CD4-positive, alpha-beta memory T cell (primary cell): ENCODE measurements at regions of chr7 and their contacts with region 1.

Region 1: DNA sequence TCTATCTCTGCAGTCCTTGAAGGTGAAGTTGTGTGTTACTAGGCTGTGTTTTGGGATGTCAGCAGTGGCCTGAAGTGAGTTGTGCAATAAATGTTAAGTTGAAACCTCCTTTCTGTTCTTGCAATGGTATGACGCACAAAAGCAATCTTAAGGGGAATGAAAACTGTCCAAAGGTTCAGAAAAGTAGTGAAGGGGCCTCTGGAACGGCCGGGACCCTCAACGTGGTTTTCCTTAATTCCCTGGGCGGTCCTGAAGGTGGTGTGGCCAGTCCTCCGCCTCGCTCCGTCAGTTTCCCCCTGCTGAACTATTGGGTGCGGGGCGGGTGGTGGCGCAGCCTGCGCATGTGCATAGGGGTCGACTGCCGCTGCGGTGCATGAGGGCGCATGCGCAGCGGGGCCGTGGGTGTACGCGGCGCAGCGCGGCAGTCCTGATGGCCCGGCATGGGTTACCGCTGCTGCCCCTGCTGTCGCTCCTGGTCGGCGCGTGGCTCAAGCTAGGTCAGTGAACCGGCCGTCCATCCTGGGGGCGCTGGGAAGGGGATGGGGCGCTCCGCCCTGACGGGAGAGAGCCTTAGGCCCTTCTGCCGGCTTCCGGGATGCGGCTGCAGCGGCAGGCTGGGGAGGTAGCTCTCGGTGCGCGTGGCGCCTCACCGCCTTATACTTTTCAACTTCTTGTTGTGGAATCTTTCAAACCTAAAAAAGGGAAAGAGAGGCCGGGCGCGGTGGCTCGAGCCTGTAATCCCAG is at the start of gene SUMF2:
- DNase-seq: peak; percentile 88 to 95 (median 92)
- H3K4me3 ChIP-seq: peak within 1 kb of the TSS; percentile 81 to 97
- H3K4me3 Mint-ChIP-seq: peak within 1 kb of the TSS; percentile 89 to 95 (median 94)
- H3K27ac ChIP-seq: peak within 1 kb of the TSS; percentile 72
- H3K27ac Mint-ChIP-seq: peak within 1 kb of the TSS; percentile 90 to 98 (median 95)
- H3K4me1 ChIP-seq: peaks cover 22% of the 10 kb centered on the region
- H3K4me1 Mint-ChIP-seq: peaks cover 21 to 38% (median 28%) of the 10 kb centered on the region in 4 donors
- H3K27me3 ChIP-seq: no peaks in the 10 kb centered on the region
- H3K27me3 Mint-ChIP-seq: no peaks in the 10 kb centered on the region
- total RNA-seq, gene SUMF2: 172 to 177 TPM

Region 2: GRCh38 chr7:56033671-56034432 is 30.2 kb before region 1 on chr7:
- CTCF ChIA-PET with region 1: interaction called, 6 read pairs
- POLR2A ChIA-PET with region 1: interaction called, 10 read pairs
- intact Hi-C with region 1: no loop called
- DNase-seq: peak; percentile 65 to 72 (median 70)
- H3K4me3 ChIP-seq: peak overlapping the region; percentile 82 to 93
- H3K4me3 Mint-ChIP-seq: peak overlapping the region; percentile 82 to 94 (median 88)
- H3K27ac ChIP-seq: peak overlapping the region; percentile 46
- H3K27ac Mint-ChIP-seq: peak overlapping the region; percentile 3 to 91 (median 77)
- H3K4me1 ChIP-seq: no peaks in the 10 kb centered on the region
- H3K4me1 Mint-ChIP-seq: peaks cover 3 to 13% (median 6%) of the 10 kb centered on the region in 4 donors
- H3K27me3 ChIP-seq: no peaks in the 10 kb centered on the region
- H3K27me3 Mint-ChIP-seq: no peaks in the 10 kb centered on the region